ENCODE measurements at regions of chr21 and their contacts with region 1.

Region 1: DNA sequence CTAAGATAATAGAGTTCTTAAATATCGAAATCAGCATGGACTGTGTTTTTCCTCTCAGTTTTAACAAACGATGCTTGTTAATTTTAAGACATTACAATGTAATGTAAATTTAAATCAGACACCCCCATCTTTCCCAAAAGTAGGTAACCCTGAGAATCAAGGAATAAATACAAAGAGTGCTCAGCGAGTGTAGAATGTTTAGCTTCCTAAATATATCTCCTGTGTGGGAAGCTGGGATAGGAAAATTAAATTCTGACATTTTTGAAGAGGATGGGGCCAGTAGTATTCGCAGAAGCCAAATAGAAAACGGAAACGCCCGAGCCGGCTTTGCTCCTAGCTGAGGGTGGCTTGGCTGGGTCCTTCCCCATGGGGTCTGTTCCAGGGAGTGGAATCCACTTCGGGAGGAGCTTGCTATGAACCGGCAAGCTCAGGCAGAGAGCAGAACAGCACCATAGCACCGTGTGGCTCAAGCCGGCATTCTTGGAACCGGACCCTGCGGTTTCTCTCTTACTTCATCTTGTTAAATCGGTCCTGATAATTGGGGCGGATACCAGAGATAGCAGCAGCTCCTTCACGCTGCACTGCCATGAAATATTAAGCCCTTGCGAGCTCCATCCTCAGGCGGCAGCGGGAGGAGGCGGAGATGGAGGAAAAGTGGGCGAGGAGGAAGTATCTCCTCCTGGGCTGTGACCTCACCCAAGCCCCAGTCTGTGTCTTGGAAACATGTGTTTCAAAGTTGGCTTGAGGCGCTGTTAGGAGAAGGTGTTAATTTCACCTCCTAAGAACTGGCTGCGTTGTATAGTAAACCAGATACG is 24.9 kb downstream of the MAP3K7CL start:
- DNase-seq: peak in 2 of 7 donors; percentile 23 to 33
- H3K4me3 ChIP-seq: peak overlapping the region in 1 of 4 donors; percentile 31
- H3K27ac ChIP-seq: peak overlapping the region in 1 of 5 donors; percentile 52
- H3K4me1 ChIP-seq: peaks cover 6% of the 10 kb centered on the region in 2 donors
- H3K27me3 ChIP-seq: no peaks in the 10 kb centered on the region
- CTCF ChIP-seq: no peak
- POLR2A ChIP-seq: no peak

Region 2: GRCh38 chr21:29091032-29091431 is 64.3 kb before region 1 on chr21:
- intact Hi-C with region 1: loop called (anchors 5 to 10 kb)
- DNase-seq: no peak
- H3K4me3 ChIP-seq: no peak overlapping the region
- H3K27ac ChIP-seq: peak overlapping the region in 3 of 5 donors; percentile 29 to 83 (median 82)
- H3K4me1 ChIP-seq: peaks cover 13 to 29% of the 10 kb centered on the region in 2 donors
- H3K27me3 ChIP-seq: no peaks in the 10 kb centered on the region
- CTCF ChIP-seq: no peak
- POLR2A ChIP-seq: no peak

Region 3: GRCh38 chr21:29351691-29352090 is 196.4 kb after region 1 on chr21:
- intact Hi-C with region 1: loop called in 1 of 2 experiments (anchors 10 kb)
- DNase-seq: no peak
- H3K4me3 ChIP-seq: no peak overlapping the region
- H3K27ac ChIP-seq: no peak overlapping the region
- H3K4me1 ChIP-seq: no peaks in the 10 kb centered on the region
- H3K27me3 ChIP-seq: no peaks in the 10 kb centered on the region
- CTCF ChIP-seq: no peak
- POLR2A ChIP-seq: no peak